ENCODE measurements at regions of chr5 and their contacts with region 1.

Region 1: GRCh38 chr5:43040287-43041098 is at the start of gene ANXA2R:
- DNase-seq: peak; percentile 91
- ATAC-seq: peak; percentile 47
- H3K4me3 Mint-ChIP-seq: peak within 1 kb of the TSS; percentile 74
- H3K27ac Mint-ChIP-seq: no peak within 1 kb of the TSS
- H3K4me1 Mint-ChIP-seq: peaks cover 63% of the 10 kb centered on the region
- H3K27me3 Mint-ChIP-seq: peaks cover 95% of the 10 kb centered on the region
- CTCF ChIP-seq: peak; percentile 78
- total RNA-seq, gene ANXA2R: 0.72 to 1.1 TPM (median 0.96 TPM) in 3 replicates

Region 2: DNA sequence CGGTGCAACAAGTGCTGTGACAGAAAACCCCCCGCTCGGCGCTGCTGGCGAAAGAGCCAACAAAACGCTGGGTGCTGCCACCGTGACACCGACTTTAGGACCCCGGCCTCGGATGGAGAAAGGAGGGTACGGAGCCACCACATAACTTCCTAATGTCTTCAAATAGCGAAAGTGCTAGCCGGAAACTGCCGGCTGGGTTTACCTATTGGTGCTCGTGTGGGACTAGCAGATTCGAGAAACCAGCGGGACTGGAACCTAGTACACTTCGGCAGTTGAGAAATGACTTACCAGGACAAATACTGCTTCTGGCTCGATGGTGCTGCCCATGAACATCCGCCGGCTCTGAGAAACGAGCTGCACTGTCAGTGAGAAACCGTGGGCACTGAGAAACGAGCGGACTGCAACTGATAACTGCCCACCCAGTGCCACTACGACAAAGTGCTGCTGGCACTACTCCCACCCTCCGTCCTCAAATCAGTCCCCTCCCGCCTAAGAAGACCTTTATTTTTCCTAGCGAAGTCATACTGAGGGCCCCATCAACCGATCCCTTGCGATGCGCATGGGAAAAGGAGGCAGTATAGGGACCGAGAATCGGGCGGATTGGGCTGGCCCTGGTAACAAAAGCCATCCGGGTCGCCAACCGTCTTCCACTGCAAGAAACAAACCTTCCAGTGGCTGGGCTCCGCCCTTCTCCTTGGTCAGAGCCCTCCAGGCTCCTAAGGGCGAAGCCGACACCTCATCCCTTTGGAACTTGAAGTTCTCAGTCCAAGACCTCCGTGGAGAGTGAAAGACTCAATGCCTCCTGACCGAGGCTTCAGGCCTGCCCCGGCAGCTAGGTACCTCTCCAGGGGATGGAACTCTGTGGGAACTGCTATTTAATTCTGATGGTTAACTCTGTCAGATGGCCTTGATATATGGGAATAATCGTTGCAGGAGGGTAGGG is 26.6 kb after region 1 on chr5:
- CTCF ChIA-PET with region 1: interaction called, 15 read pairs
- POLR2A ChIA-PET with region 1: interaction called, 6 read pairs
- DNase-seq: peak; percentile 82
- ATAC-seq: peak; percentile 62
- H3K4me3 Mint-ChIP-seq: peak overlapping the region; percentile 87
- H3K27ac Mint-ChIP-seq: peak overlapping the region; percentile 97
- H3K4me1 Mint-ChIP-seq: peaks cover 29% of the 10 kb centered on the region
- H3K27me3 Mint-ChIP-seq: no peaks in the 10 kb centered on the region
- CTCF ChIP-seq: no peak

Measured in WTC11 (cell line).